Activated CD8-positive, alpha-beta T cell treated with anti-CD3 and anti-CD28 coated beads, Interleukin-2, amount 10 ng/mL, durations not matched to agents 7 days and 5 days (primary cell): ENCODE measurements at regions of chr1 and their contacts with region 1.

Region 1: GRCh38 chr1:89358287-89358893 is 5.5 kb upstream of the GBP6 start:
- DNase-seq: peak; percentile 90
- ATAC-seq: peak; percentile 85
- H3K4me3 Mint-ChIP-seq: peak overlapping the region; percentile 39
- H3K27ac Mint-ChIP-seq: peak overlapping the region; percentile 4
- H3K4me1 Mint-ChIP-seq: peaks cover 57% of the 10 kb centered on the region
- H3K27me3 Mint-ChIP-seq: no peaks in the 10 kb centered on the region

Region 2: DNA sequence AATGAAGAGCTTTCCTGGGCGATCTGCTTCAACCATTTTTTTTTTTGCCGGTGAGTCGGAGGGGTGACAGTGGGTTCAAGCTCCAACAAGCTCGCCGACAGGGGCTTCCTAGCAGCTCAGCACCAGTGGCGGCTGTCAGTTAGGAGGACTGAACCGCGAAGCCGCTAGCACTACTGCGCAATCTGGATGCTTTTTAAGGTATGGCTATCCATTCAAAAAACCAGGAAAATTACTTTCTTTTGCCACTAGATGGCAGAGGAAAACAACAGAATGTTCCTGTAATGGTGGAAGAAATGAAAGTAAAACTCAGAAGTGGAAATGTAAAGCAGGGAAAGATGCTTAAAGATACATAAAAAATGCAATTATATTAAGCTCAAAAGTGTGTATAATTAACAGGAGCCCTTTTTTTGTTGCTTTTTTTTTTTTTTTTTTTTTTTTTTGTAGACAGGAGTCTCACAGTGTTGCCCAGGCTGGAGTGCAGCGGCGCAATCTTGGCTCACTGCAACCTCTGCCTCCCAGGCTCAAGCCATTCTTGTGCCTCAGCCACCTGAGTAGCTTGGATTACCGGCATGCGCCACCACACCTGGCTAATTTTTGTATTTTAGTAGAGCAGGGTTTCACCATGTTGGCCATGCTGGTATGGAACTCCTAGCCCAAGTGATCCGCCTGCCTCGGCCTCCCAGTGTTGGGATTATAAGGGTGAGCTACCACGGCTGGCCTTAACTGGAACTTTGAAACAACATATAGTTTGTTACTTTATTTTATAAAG is 374.4 kb before region 1 on chr1:
- CTCF ChIA-PET with region 1: interaction called, 20 read pairs
- POLR2A ChIA-PET with region 1: no interaction called
- DNase-seq: peak; percentile 43
- ATAC-seq: peak; percentile 76
- H3K4me3 Mint-ChIP-seq: peak overlapping the region; percentile 48
- H3K27ac Mint-ChIP-seq: peak overlapping the region; percentile 56
- H3K4me1 Mint-ChIP-seq: peaks cover 69% of the 10 kb centered on the region
- H3K27me3 Mint-ChIP-seq: no peaks in the 10 kb centered on the region

Region 3: DNA sequence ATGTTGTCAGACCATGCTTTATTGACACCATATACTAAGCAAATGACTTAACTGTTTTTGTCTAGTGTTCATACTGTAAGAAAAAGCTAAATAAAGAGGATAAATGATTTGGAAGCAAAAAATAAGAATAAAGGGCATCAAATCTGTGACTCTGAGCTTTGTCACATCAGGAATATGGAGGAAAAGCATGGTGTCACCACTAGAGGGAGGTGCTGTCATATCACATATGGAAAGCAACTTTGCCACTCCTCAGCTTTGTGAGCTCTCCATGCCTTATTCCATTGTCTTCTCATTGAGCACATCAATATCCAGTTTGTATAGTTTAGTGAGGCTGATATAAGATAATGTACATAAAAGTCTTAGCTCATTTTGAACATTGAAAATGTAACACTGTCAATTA is 272.6 kb before region 1 on chr1:
- CTCF ChIA-PET with region 1: interaction called, 35 read pairs
- POLR2A ChIA-PET with region 1: no interaction called
- DNase-seq: peak; percentile 59
- ATAC-seq: peak; percentile 76
- H3K4me3 Mint-ChIP-seq: no peak overlapping the region
- H3K27ac Mint-ChIP-seq: no peak overlapping the region
- H3K4me1 Mint-ChIP-seq: peaks cover 3% of the 10 kb centered on the region
- H3K27me3 Mint-ChIP-seq: no peaks in the 10 kb centered on the region

Region 4: GRCh38 chr1:89198491-89199072 is 159.8 kb before region 1 on chr1 and contains the start of gene GBP4:
- CTCF ChIA-PET with region 1: interaction called, 63 read pairs
- POLR2A ChIA-PET with region 1: interaction called, 5 read pairs
- DNase-seq: peak; percentile 66
- ATAC-seq: peak; percentile 81
- H3K4me3 Mint-ChIP-seq: peak within 1 kb of the TSS; percentile 86
- H3K27ac Mint-ChIP-seq: peak within 1 kb of the TSS; percentile 91
- H3K4me1 Mint-ChIP-seq: peaks cover 62% of the 10 kb centered on the region
- H3K27me3 Mint-ChIP-seq: no peaks in the 10 kb centered on the region
- total RNA-seq, gene GBP4: 51.0 to 60.7 TPM

Region 5: GRCh38 chr1:89274411-89274857 is 84.0 kb before region 1 on chr1:
- CTCF ChIA-PET with region 1: interaction called, 167 read pairs
- POLR2A ChIA-PET with region 1: interaction called, 28 read pairs
- DNase-seq: no peak
- ATAC-seq: peak; percentile 36
- H3K4me3 Mint-ChIP-seq: peak overlapping the region; percentile 80
- H3K27ac Mint-ChIP-seq: peak overlapping the region; percentile 96
- H3K4me1 Mint-ChIP-seq: peaks cover 59% of the 10 kb centered on the region
- H3K27me3 Mint-ChIP-seq: no peaks in the 10 kb centered on the region

Region 6: GRCh38 chr1:89298461-89298860 is 59.9 kb before region 1 on chr1:
- CTCF ChIA-PET with region 1: interaction called, 13 read pairs
- POLR2A ChIA-PET with region 1: no interaction called
- DNase-seq: no peak
- ATAC-seq: no peak
- H3K4me3 Mint-ChIP-seq: no peak overlapping the region
- H3K27ac Mint-ChIP-seq: no peak overlapping the region
- H3K4me1 Mint-ChIP-seq: peaks cover 61% of the 10 kb centered on the region
- H3K27me3 Mint-ChIP-seq: no peaks in the 10 kb centered on the region